ENCODE measurements at regions of chr11 and their contacts with region 1.

Region 1: GRCh38 chr11:65170058-65170534 is at the start of gene SPDYC:
- DNase-seq: no peak
- H3K4me3 ChIP-seq: no peak within 1 kb of the TSS
- H3K27ac ChIP-seq: peak within 1 kb of the TSS in 1 of 4 donors; percentile 9
- H3K4me1 ChIP-seq: peaks cover 0 to 11% (median 4%) of the 10 kb centered on the region in 3 donors
- H3K27me3 ChIP-seq: peaks cover 0 to 2% (median 0%) of the 10 kb centered on the region in 4 donors
- CTCF ChIP-seq: no peak
- POLR2A ChIP-seq: no peak
- total RNA-seq, gene SPDYC: not detected

Region 2: DNA sequence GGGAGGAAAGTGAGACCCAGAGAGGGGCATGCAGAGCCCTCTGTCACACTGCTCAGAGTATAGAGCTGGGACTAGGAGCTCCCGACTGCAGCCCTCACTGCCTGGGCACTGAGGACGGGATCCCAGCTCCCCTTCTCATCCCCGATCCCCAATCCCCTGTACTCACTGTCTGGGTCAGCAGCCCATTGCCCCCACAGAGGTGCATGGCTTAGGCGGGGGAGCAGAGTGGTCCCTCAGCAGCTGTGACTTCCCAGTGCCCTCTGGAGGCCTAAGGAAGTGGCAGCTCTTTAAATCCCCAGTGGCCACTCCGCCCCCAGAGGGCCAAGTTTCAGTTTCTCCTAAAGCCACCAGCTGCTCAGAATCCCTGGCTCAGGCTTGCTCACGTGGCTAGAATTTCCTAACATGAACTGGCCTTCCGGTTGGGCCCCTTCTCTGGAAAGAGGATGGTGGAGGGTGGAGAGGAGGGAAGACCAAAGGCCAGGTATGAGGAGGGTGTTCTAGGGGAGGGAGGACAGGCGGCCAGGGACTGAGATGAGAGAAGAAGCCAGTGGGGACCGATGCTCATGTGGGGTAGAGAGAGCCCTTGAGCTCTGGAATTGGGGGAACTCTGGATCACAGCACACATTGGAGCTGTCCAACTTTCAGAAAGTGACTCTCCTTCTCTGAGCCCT is 173.3 kb before region 1 on chr11 and contains the start of gene BATF2:
- intact Hi-C with region 1: no loop called
- DNase-seq: no peak
- H3K4me3 ChIP-seq: peak within 1 kb of the TSS in 3 of 4 donors; percentile 37 to 62 (median 40)
- H3K27ac ChIP-seq: peak within 1 kb of the TSS in 3 of 4 donors; percentile 61 to 68 (median 63)
- H3K4me1 ChIP-seq: peaks cover 0 to 21% (median 0%) of the 10 kb centered on the region in 3 donors
- H3K27me3 ChIP-seq: no peaks in the 10 kb centered on the region
- CTCF ChIP-seq: peak in 4 of 6 experiments; percentile 28 to 45 (median 42)
- POLR2A ChIP-seq: peak in 1 of 4 donors; percentile 34
- total RNA-seq, gene BATF2: 0.38 to 0.76 TPM in 2 of 4 donors, not detected in the others

Region 3: GRCh38 chr11:65121865-65122581 is 48.1 kb before region 1 on chr11 and contains the starts of genes FAU and MRPL49:
- intact Hi-C with region 1: loop called (anchors 10 kb)
- DNase-seq: peak; percentile 95
- H3K4me3 ChIP-seq: peak within 1 kb of the TSS; percentile 68 to 90 (median 84)
- H3K27ac ChIP-seq: peak within 1 kb of the TSS; percentile 96 to 98 (median 97)
- H3K4me1 ChIP-seq: peaks cover 10 to 63% (median 19%) of the 10 kb centered on the region in 3 donors
- H3K27me3 ChIP-seq: no peaks in the 10 kb centered on the region
- CTCF ChIP-seq: peak in 2 of 6 experiments; percentile 9 to 54
- POLR2A ChIP-seq: peak in 3 of 4 donors; percentile 88 to 94 (median 89)
- total RNA-seq, gene FAU: 436 to 777 (median 528) TPM
- total RNA-seq, gene MRPL49: 68.1 to 76.2 (median 72.0) TPM